IMR-90 (cell line): ENCODE measurements at regions of chr2 and their contacts with region 1.

Region 1: DNA sequence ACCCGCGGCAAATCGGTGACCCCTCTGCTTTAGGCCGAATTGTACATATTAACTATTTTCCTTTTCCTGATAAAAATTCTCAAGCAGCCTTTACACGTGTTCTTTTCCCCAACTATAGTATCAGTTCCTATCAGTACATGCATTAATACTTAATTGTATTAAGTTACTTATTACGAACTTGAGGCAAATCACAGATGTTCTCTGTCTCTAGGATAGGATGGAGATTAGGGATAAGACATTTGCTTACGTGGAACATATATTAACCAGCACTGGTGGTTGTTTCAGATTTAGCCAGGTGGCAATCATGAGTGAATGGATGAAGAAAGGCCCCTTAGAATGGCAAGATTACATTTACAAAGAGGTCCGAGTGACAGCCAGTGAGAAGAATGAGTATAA is 675 bp downstream of the GEMIN6 start:
- DNase-seq: no peak
- ATAC-seq: no peak
- H3K4me3 ChIP-seq: peak overlapping the region; percentile 65
- H3K27ac ChIP-seq: peak overlapping the region; percentile 36
- H3K4me1 ChIP-seq: no peaks in the 10 kb centered on the region
- H3K27me3 ChIP-seq: no peaks in the 10 kb centered on the region
- CTCF ChIP-seq: no peak
- POLR2A ChIP-seq: no peak
- RAD21 ChIP-seq: no peak

Region 2: GRCh38 chr2:38750891-38751595 is 27.6 kb before region 1 on chr2 and contains the start of gene SRSF7:
- CTCF ChIA-PET with region 1: no interaction called
- POLR2A ChIA-PET with region 1: interaction called, 4 read pairs
- dilution Hi-C with region 1: no loop called
- in situ Hi-C with region 1: no loop called
- intact Hi-C with region 1: loop called (anchors 2 kb)
- DNase-seq: peak; percentile 99
- ATAC-seq: peak; percentile 81
- H3K4me3 ChIP-seq: peak within 1 kb of the TSS; percentile 89
- H3K27ac ChIP-seq: peak within 1 kb of the TSS; percentile 96
- H3K4me1 ChIP-seq: peaks cover 3% of the 10 kb centered on the region; the same call in 1 of the 2 replicates
- H3K27me3 ChIP-seq: no peaks in the 10 kb centered on the region
- CTCF ChIP-seq: no peak
- POLR2A ChIP-seq: peak; percentile 100
- RAD21 ChIP-seq: no peak; the same call in 1 of the 2 replicates
- total RNA-seq, gene SRSF7: 148 and 260 TPM in 2 replicates